ENCODE measurements at regions of chr2 and their contacts with region 1.

Region 1: DNA sequence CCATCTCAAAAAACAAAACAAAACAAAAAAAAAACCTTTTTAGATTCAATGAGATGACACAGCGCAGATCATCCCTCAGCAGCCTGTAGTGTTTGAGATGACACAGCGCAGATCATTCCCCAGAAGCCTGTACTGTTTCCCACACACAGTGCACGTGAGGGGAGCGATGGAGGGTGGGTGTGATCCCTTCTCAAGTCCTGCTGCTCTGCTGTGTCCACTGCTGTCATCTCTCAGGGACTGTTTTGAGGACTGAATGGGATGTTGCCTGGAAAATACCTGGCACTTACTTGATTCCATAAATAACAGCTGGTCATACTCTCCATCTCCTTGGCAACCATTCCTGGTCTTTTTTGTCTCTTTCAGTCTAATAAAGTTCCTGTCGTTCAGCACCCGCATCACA is 25.7 kb downstream of the TGOLN2 start:
- DNase-seq: no peak
- ATAC-seq: no peak
- H3K4me3 ChIP-seq: no peak overlapping the region
- H3K4me3 Mint-ChIP-seq: no peak overlapping the region
- H3K27ac ChIP-seq: no peak overlapping the region
- H3K27ac Mint-ChIP-seq: no peak overlapping the region
- H3K4me1 ChIP-seq: no peaks in the 10 kb centered on the region
- H3K4me1 Mint-ChIP-seq: peaks cover 15% of the 10 kb centered on the region
- H3K27me3 ChIP-seq: no peaks in the 10 kb centered on the region
- H3K27me3 Mint-ChIP-seq: peaks cover 5% of the 10 kb centered on the region
- CTCF ChIP-seq: no peak

Region 2: GRCh38 chr2:85017411-85018048 is 284.6 kb before region 1 on chr2:
- CTCF ChIA-PET with region 1: interaction called, 4 read pairs
- POLR2A ChIA-PET with region 1: no interaction called
- intact Hi-C with region 1: loop called in 1 of 2 experiments (anchors 2 kb)
- DNase-seq: peak in 2 of 9 experiments; percentile 23 to 39
- ATAC-seq: no peak
- H3K4me3 ChIP-seq: no peak overlapping the region
- H3K4me3 Mint-ChIP-seq: no peak overlapping the region
- H3K27ac ChIP-seq: no peak overlapping the region
- H3K27ac Mint-ChIP-seq: peak overlapping the region; percentile 64
- H3K4me1 ChIP-seq: peaks cover 15% of the 10 kb centered on the region
- H3K4me1 Mint-ChIP-seq: peaks cover 69% of the 10 kb centered on the region
- H3K27me3 ChIP-seq: no peaks in the 10 kb centered on the region
- H3K27me3 Mint-ChIP-seq: no peaks in the 10 kb centered on the region
- CTCF ChIP-seq: peak; percentile 56

Region 3: GRCh38 chr2:85221067-85221691 is 80.9 kb before region 1 on chr2:
- CTCF ChIA-PET with region 1: no interaction called
- POLR2A ChIA-PET with region 1: no interaction called
- intact Hi-C with region 1: no loop called
- DNase-seq: no peak
- ATAC-seq: no peak
- H3K4me3 ChIP-seq: no peak overlapping the region
- H3K4me3 Mint-ChIP-seq: no peak overlapping the region
- H3K27ac ChIP-seq: no peak overlapping the region
- H3K27ac Mint-ChIP-seq: no peak overlapping the region
- H3K4me1 ChIP-seq: no peaks in the 10 kb centered on the region
- H3K4me1 Mint-ChIP-seq: no peaks in the 10 kb centered on the region
- H3K27me3 ChIP-seq: peaks cover 0 to 2% of the 10 kb centered on the region in 2 experiments
- H3K27me3 Mint-ChIP-seq: peaks cover 17% of the 10 kb centered on the region
- CTCF ChIP-seq: no peak

Region 4: GRCh38 chr2:85255813-85256594 is 46.1 kb before region 1 on chr2:
- CTCF ChIA-PET with region 1: interaction called, 16 read pairs
- POLR2A ChIA-PET with region 1: no interaction called
- intact Hi-C with region 1: no loop called
- DNase-seq: no peak
- ATAC-seq: no peak
- H3K4me3 ChIP-seq: no peak overlapping the region
- H3K4me3 Mint-ChIP-seq: no peak overlapping the region
- H3K27ac ChIP-seq: no peak overlapping the region
- H3K27ac Mint-ChIP-seq: no peak overlapping the region
- H3K4me1 ChIP-seq: no peaks in the 10 kb centered on the region
- H3K4me1 Mint-ChIP-seq: no peaks in the 10 kb centered on the region
- H3K27me3 ChIP-seq: no peaks in the 10 kb centered on the region
- H3K27me3 Mint-ChIP-seq: no peaks in the 10 kb centered on the region
- CTCF ChIP-seq: no peak

Region 5: DNA sequence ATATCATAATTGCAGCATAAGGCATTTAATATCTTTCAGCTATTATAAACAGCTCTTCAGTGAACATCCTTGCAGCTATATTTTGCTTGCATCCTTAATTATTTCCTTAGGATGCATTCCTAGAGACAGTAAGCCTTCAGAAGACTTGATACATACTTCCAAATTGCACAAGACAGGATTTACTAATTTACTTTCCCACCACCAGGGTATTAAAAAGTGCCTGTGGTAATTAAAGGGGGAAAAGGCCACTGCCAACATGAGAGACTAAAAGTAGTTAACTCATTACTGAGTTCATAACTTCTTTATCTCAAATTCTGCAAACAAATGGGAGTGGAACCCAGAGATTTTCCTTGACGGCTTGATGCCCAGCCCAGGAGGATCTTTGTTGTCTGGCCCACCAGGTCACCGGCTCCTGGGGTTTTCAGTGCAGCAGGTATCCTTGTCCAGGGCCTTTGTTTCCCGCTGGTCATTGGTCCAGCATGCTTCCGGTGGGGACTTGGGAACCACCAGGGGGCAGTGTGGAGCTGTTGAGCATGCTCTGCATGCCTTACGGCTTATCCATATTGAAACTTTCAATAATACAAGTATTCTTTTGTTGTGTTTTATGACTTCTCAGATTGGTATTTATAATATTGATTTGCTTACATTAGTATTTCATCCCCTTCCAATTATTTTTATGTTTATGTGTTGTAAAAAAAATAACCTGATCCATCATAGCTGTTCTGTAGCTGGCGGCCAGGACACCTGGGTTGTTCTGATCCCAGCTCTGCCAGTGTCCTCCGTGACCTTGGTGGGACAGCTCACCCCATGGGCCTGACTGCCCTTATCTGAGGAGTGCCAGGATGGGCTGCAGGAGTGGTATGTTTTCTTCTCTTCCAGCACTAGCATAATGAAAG is 35.7 kb before region 1 on chr2:
- CTCF ChIA-PET with region 1: interaction called, 180 read pairs
- POLR2A ChIA-PET with region 1: no interaction called
- intact Hi-C with region 1: loop called in 1 of 2 experiments (anchors 1 kb)
- DNase-seq: peak; percentile 31 to 79 (median 74)
- ATAC-seq: no peak
- H3K4me3 ChIP-seq: no peak overlapping the region
- H3K4me3 Mint-ChIP-seq: no peak overlapping the region
- H3K27ac ChIP-seq: no peak overlapping the region
- H3K27ac Mint-ChIP-seq: no peak overlapping the region
- H3K4me1 ChIP-seq: no peaks in the 10 kb centered on the region
- H3K4me1 Mint-ChIP-seq: no peaks in the 10 kb centered on the region
- H3K27me3 ChIP-seq: no peaks in the 10 kb centered on the region
- H3K27me3 Mint-ChIP-seq: peaks cover 8% of the 10 kb centered on the region
- CTCF ChIP-seq: peak; percentile 89

Region 6: DNA sequence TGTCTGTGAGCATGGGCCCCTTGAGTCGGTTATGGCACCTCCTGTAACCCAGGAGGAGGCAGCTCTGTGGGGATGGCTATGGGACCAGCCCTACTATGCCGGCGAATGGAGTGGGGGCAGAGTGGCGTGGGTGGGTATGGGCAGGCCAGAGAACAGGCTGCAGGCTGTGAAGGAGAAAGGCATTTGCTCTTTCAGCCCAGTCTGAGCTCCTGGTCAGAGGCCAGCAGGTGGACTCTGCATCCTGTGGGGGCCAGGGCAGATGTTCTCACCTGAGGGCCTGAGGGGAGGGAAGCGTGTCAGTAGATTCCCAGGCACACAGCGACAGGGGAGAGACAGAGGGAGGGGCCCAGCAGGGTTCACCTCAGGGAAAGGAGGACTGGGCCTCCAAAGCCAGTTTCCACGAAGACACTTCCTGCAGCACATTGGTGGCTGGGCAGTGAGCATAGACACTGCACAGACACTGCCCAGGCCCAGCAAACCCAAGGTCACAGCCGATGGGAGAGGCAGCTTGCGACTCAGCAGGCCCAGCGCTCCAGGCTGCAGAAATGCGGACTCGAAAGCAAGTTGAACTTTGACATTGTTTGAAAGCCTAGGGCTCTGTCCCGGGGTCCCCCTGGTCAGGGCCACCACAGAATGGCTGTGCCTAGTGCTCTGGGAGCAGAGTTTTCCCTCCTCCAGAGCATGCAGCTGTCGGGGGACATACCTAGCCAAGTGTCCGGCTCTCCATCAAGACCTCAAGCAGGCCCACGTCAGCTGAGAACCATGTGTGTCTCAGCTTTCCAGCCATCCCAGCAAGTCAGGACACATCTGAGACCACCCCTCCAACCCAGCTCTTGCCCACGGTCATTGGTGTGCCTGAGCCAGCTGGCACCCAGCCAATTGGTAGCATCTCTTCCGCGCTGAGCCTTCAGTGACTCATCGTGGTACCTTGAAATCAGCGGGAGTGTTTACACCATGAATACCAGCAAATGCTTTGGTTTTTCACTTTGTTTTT is 28.1 kb before region 1 on chr2:
- CTCF ChIA-PET with region 1: interaction called, 180 read pairs
- POLR2A ChIA-PET with region 1: no interaction called
- intact Hi-C with region 1: no loop called
- DNase-seq: no peak
- ATAC-seq: no peak
- H3K4me3 ChIP-seq: no peak overlapping the region
- H3K4me3 Mint-ChIP-seq: no peak overlapping the region
- H3K27ac ChIP-seq: no peak overlapping the region
- H3K27ac Mint-ChIP-seq: no peak overlapping the region
- H3K4me1 ChIP-seq: no peaks in the 10 kb centered on the region
- H3K4me1 Mint-ChIP-seq: no peaks in the 10 kb centered on the region
- H3K27me3 ChIP-seq: no peaks in the 10 kb centered on the region
- H3K27me3 Mint-ChIP-seq: peaks cover 22% of the 10 kb centered on the region
- CTCF ChIP-seq: no peak